ENCODE measurements at regions of chr10 and their contacts with region 1.

Region 1: GRCh38 chr10:69004821-69005220 is 16.2 kb downstream of the KIFBP start:
- DNase-seq: peak; percentile 18
- ATAC-seq: no peak
- H3K4me3 ChIP-seq: no peak overlapping the region
- H3K27ac ChIP-seq: no peak overlapping the region
- H3K4me1 ChIP-seq: no peaks in the 10 kb centered on the region
- H3K27me3 ChIP-seq: no peaks in the 10 kb centered on the region
- CTCF ChIP-seq: peak; percentile 27 to 65 (median 41); a peak in 4 of 6 replicates
- POLR2A ChIP-seq: no peak
- RAD21 ChIP-seq: peak; percentile 71

Region 2: DNA sequence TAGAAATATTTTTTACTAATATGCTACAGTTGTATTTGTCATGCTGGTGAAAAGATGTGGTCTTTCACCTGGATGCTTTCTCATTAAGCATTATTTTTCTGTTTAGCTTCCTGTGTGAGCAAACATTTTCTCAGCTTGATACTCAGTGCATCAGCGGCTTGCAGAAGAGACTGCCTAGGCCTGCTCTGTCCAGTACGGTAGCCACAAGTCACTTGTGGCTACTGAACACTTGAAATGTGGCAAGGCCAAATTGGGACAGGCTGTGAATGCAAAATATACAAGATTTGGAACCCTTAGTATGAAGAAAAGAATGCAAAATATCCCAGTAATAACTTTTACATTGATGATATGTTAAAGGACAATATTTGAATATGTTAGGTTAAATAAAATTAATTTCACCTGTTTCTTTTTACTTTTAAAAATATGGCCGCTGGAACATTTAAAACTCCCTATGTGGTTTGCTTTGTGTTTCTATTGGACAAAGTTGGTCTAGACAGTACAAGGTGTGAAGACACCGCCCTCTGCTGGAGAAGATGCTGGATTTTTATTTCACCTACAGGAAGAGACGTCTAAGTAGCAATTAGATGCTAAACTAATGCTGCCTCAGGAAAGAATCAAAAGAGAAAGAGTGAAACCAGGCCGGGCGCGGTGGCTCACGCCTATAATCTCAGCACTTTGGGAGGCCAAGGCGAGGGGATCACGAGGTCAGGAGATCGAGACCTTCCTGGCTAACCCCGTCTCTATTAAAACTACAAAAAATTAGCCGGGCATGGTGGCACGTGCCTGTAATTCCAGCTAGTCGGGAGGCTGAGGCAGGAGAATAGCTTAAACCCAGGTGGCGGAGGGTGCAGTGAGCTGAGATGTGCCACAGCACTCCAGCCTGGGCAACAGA is 88.4 kb after region 1 on chr10:
- CTCF ChIA-PET with region 1: interaction called, 17 read pairs
- POLR2A ChIA-PET with region 1: no interaction called
- RAD21 ChIA-PET with region 1: no interaction called
- intact Hi-C with region 1: loop called (anchors 1 kb)
- DNase-seq: peak; percentile 89
- ATAC-seq: peak; percentile 97
- H3K4me3 ChIP-seq: no peak overlapping the region
- H3K27ac ChIP-seq: no peak overlapping the region
- H3K4me1 ChIP-seq: peaks cover 0 to 2% of the 10 kb centered on the region in 2 experiments; a peak in 2 of 4 replicates
- H3K27me3 ChIP-seq: no peaks in the 10 kb centered on the region
- CTCF ChIP-seq: peak; percentile 57 to 87 (median 81)
- POLR2A ChIP-seq: no peak
- RAD21 ChIP-seq: peak; percentile 88

Region 3: GRCh38 chr10:69141304-69141703 is 136.5 kb after region 1 on chr10:
- CTCF ChIA-PET with region 1: no interaction called
- POLR2A ChIA-PET with region 1: no interaction called
- RAD21 ChIA-PET with region 1: no interaction called
- intact Hi-C with region 1: no loop called
- DNase-seq: no peak
- ATAC-seq: no peak; the same call in 1 of the 2 replicates
- H3K4me3 ChIP-seq: no peak overlapping the region
- H3K27ac ChIP-seq: no peak overlapping the region
- H3K4me1 ChIP-seq: no peaks in the 10 kb centered on the region
- H3K27me3 ChIP-seq: no peaks in the 10 kb centered on the region
- CTCF ChIP-seq: peak in 1 of 3 experiments; percentile 32; a peak in 2 of 6 replicates
- POLR2A ChIP-seq: no peak
- RAD21 ChIP-seq: peak; percentile 17; the same call in 1 of the 2 replicates

Region 4: DNA sequence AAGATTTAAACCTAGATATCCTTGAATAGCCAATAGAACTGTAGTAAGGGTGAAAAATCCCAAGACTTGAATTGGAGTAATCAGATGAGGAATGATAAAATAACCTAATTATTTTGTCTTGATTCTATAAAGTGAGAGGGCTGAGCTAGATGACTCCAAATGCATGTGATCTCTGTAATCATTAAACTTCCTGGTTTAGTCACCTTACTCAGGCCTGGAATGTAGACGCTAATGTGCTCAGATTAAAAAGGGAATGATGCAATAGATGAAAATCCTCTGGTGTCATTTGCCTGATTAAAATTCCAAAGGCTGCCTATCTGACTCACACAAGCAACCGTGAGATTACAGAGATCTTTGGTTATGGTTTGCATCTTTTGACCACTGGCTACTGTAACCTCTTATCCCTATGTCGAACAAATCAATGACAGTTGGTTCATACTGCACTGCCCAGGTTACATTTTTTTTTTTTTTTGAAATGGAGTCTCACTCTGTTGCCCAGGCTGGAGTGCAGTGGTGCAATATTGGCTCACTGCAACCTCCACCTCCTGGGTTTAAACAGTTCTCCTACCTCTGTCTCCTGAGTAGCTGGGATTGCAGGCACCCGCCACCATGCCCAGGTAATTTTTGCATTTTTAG is 212.4 kb after region 1 on chr10:
- CTCF ChIA-PET with region 1: no interaction called
- POLR2A ChIA-PET with region 1: no interaction called
- RAD21 ChIA-PET with region 1: no interaction called
- intact Hi-C with region 1: loop called (anchors 10 kb)
- DNase-seq: peak; percentile 90
- ATAC-seq: peak; percentile 76
- H3K4me3 ChIP-seq: no peak overlapping the region
- H3K27ac ChIP-seq: peak overlapping the region; percentile 0
- H3K4me1 ChIP-seq: peaks cover 37 to 54% of the 10 kb centered on the region in 2 experiments
- H3K27me3 ChIP-seq: no peaks in the 10 kb centered on the region
- CTCF ChIP-seq: no peak
- POLR2A ChIP-seq: no peak
- RAD21 ChIP-seq: no peak

Measured in HCT116 (cell line).